Activated CD8-positive, alpha-beta memory T cell treated with anti-CD3 and anti-CD28 coated beads, Interleukin-2, amount 10 ng/mL, durations not matched to agents 7 days and 5 days (primary cell): ENCODE measurements at regions of chr17 and their contacts with region 1.

Region 1: DNA sequence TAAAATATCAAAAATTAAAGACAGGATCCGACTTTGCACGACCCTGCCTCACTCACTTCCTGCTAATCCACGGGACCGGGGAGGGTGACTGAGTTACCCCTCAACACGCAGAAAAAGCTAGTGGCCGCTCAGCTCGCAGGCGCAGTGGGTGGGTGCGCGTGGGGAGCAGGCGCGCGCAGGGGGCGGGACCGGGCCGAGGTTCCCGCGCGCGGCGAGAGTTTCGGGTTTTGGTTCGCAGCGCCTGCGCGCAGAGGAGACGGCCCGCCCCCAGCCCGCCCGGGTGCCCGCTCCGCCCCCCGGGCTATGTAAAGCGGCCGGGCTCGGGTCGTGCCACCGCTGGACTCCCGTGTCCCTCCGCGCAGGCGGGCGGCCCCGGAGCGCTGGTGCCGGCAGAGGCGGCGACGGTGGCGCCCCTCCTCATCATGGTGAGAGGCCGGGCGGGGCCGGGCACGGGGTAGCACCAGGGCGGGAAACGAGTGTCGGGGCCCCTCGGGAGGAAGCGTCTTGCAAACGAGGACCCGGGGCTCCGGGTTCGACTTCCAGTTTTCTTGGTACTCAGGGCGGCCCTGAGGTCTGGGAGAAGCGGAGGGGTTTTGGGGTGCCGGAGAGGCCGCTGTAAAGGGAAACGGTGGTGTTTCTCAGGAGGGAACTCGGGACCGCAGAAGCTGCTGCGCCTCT is at the start of gene CNP:
- DNase-seq: peak; percentile 93
- ATAC-seq: peak; percentile 83
- H3K4me3 Mint-ChIP-seq: peak within 1 kb of the TSS; percentile 82
- H3K27ac Mint-ChIP-seq: peak within 1 kb of the TSS; percentile 87
- H3K4me1 Mint-ChIP-seq: peaks cover 38% of the 10 kb centered on the region
- H3K27me3 Mint-ChIP-seq: no peaks in the 10 kb centered on the region
- total RNA-seq, gene CNP: 98.1 to 112 TPM

Region 2: DNA sequence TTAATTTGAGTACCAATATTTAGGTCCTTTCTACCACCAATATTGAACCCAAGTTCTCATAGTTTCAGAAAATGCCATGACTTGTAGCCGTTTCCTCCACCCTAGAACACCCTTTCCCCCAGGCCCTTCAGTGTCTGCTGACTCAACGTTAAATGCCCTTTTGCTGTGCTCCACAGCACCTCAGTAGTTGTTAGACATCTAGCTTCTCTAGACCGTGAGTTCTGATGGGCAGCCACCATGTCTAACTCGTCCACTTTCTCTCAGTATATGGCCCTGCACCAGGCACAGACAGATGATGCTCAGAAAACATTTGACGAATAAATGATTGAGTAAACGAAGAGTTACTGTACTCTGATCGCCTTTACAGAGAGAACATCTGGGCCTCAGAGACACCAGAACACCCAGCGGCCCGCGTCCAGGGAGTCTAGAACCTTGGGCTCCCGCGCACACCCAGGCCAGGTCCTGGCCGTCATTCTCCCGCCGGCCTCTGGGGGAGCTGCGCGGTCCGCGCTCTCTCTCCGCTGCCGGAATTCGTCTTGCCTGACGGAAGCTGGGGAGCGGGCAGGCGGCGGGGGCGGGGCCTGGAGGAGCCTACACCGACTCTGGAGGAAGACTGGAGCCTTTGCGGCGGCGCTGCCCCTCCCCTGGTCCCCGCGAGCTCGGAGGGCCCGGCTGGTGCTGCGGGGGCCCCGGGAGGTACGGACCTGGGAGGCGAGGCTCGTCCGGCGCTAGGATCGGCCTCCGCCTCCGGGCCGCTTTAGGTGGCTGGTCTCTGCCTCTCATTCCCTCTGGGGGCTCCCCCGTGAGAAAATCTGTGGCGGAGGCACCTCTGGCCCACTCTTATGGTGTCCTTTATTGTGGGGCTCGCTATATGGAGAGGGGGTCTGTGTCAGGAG is 53.2 kb after region 1 on chr17 and contains the start of gene NKIRAS2:
- CTCF ChIA-PET with region 1: interaction called, 87 read pairs
- DNase-seq: peak; percentile 95
- ATAC-seq: peak; percentile 78
- H3K4me3 Mint-ChIP-seq: peak within 1 kb of the TSS; percentile 93
- H3K27ac Mint-ChIP-seq: peak within 1 kb of the TSS; percentile 77
- H3K4me1 Mint-ChIP-seq: peaks cover 57% of the 10 kb centered on the region
- H3K27me3 Mint-ChIP-seq: no peaks in the 10 kb centered on the region
- total RNA-seq, gene NKIRAS2: 21.0 to 23.7 TPM

Region 3: DNA sequence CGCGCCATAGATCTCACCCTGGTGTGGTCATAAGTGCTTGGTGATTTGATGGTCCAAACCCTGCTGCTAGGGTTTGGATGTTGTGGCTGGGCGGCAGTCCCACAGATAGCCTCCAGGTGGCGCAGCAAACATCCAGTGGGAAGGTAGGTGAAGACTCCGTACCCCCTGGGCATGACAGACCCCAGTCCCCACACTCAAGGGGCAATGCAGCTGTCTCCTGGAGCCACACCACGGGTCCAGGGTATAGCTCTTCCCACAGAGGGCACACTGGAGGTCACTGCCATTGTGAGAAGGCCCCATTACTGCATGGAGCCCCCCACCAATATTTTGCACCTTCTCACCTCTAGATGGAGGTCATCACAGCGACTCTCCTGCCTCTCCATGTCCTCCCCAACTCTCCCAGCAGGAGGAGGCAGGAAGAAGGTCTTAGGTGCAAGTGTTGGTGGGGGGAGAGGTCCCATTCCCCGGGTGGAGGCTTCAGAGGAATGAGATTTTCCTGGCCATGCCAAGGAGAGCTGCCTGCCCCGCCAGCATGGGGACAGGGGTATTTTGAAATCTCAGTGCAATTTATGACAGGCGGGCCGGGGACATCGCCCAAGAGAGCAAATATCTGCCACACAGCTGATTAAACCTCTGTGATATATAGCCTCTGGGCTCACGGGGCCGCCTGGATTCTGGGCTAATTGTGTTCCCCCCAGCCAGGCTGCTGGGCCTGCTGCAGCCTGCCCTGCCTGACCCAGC is 100.9 kb after region 1 on chr17:
- CTCF ChIA-PET with region 1: interaction called, 12 read pairs
- DNase-seq: peak; percentile 80
- ATAC-seq: peak; percentile 58
- H3K4me3 Mint-ChIP-seq: no peak overlapping the region
- H3K27ac Mint-ChIP-seq: no peak overlapping the region
- H3K4me1 Mint-ChIP-seq: peaks cover 29% of the 10 kb centered on the region
- H3K27me3 Mint-ChIP-seq: peaks cover 11% of the 10 kb centered on the region

Region 4: DNA sequence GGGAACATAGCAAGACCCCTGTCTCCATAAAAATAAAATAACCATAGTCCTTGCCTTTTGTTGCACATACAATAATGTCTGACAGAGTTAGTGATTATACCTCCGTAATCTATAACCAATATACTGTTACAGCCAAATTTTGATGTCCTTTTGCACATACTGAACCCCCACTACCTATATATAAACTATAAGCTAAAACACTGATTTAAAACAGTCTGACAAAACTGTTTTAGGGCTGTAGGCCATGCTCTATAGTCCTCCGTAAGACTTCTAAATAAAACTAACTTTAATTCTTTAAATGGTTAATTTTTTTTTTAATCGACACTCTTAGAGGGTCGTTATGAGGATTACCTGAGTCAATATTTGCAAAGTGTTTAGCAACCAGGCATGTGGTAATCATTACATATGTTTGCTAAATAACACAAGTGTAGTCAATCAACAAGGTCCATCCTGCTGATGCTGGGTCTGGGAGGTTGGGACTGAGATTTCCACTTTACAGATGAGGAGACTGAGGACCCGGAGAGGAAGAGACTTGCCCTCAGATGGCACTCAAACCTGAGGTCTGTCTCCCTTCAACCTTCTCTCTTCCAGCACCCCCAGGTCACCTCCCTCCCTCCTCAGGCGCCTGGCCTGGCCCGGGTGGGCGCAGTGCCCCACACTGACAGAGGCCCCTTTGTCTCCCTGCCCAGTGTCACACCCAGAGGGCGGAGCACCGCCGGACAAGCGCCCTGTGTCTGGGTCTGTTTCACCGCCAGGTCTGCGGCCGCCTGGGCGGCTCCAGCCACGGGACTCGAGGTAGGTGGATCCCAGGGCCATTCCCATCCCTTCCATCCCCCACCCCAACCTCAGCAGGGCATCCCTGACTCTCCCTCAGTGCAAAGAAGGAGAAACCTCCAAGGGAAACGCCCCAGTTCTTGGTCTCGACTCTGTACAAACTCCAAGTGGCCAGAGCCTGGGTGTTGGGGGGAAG is 121.4 kb after region 1 on chr17:
- CTCF ChIA-PET with region 1: no interaction called
- DNase-seq: no peak
- ATAC-seq: no peak
- H3K4me3 Mint-ChIP-seq: no peak overlapping the region
- H3K27ac Mint-ChIP-seq: no peak overlapping the region
- H3K4me1 Mint-ChIP-seq: no peaks in the 10 kb centered on the region
- H3K27me3 Mint-ChIP-seq: peaks cover 15% of the 10 kb centered on the region

Region 5: GRCh38 chr17:42112552-42113176 is 146.1 kb after region 1 on chr17 and contains the start of gene DHX58:
- CTCF ChIA-PET with region 1: interaction called, 30 read pairs
- DNase-seq: peak; percentile 92
- ATAC-seq: peak; percentile 85
- H3K4me3 Mint-ChIP-seq: peak within 1 kb of the TSS; percentile 91
- H3K27ac Mint-ChIP-seq: peak within 1 kb of the TSS; percentile 98
- H3K4me1 Mint-ChIP-seq: peaks cover 56% of the 10 kb centered on the region
- H3K27me3 Mint-ChIP-seq: no peaks in the 10 kb centered on the region
- total RNA-seq, gene DHX58: 65.8 to 105 TPM

Region 6: DNA sequence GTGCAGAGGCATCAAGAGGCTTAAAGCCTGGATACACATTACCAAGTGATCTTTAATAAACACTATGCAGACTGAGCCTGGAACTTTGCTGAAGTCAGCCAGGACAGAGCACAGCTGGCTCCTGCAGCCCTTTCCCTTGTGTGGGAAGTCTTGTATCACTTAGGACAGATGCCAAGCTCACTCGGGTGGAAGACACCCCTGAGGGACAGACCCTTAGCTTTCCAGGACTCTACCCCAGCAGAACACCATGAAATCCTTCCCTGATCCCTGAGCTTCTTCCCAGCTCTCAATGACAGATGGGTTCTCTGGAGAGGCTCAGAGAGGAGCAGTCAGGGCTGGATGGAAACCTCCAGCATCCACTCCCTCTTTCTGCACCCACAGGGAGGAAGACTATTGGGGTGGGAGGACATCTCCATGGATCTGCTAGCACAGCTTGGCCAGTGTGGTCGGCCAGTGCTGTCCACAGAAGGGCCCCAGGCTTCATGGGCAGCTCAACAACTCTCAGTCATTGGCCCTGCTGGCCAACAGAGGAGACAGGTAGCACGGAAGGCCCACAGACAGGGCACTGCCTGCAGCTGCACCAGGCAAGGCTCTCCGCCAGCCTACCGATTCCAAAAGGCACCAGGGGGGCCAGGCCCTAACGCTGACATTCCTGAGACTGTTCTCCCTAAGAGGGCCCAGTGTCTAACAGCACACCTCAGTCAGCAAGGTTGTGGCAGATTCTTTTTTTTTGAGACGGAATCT is 172.3 kb after region 1 on chr17:
- CTCF ChIA-PET with region 1: interaction called, 11 read pairs
- DNase-seq: no peak
- ATAC-seq: no peak
- H3K4me3 Mint-ChIP-seq: no peak overlapping the region
- H3K27ac Mint-ChIP-seq: no peak overlapping the region
- H3K4me1 Mint-ChIP-seq: peaks cover 36% of the 10 kb centered on the region
- H3K27me3 Mint-ChIP-seq: no peaks in the 10 kb centered on the region